Dorsolateral prefrontal cortex (tissue), 120 donors: ENCODE measurements at regions of chr2 and their contacts with region 1.

Region 1: DNA sequence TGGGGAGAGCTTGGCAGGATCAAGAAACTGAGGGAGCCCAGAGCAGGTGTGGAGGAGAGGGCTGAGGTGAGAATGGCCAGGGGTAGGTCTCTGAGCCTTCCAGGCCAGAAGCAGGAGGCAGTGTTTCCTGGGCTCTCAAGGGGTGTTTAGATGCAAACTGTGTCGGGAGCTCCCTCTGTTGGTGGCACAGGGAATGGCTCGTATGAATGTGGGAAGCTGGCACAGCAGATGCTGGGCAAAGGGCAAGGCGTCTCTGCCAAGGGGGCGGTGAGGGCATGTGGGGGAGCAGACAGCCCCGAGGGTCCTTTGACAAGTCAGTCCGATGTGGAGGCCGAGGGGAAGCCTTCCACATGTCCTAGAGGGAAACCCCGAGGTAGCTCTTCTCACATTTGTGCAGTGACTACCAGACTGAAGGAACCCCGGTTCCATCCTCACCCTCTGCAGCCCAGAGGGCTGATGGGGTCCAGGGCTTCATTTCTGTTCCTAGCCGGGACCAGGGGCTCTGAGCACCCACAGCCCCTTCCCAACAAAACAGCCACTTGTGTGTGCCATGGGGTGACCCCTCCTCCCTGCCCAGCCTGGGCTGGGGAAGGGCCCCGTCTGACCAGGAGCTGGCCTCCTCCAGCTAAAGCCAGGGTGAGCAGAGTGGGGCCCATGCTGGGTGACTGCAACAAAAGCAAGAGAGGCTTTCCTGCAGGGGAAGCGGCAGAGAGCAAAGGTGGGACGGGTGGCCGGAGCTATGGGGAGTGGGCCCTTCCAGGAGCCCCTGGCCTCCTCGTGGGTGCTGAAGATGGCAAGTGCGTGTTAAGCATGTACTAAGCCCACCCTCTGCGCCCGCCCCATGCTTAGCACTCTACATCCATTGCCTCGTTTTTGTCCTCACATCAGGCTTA is 103.4 kb downstream of the SEPTIN10 start:
- DNase-seq: peak; percentile 65 to 86 (median 74)
- H3K4me3 ChIP-seq: no peak overlapping the region
- H3K27ac ChIP-seq: no peak overlapping the region
- H3K27me3 ChIP-seq: no peaks in the 10 kb centered on the region
- CTCF ChIP-seq: peak; percentile 76 to 96 (median 91)

Region 2: DNA sequence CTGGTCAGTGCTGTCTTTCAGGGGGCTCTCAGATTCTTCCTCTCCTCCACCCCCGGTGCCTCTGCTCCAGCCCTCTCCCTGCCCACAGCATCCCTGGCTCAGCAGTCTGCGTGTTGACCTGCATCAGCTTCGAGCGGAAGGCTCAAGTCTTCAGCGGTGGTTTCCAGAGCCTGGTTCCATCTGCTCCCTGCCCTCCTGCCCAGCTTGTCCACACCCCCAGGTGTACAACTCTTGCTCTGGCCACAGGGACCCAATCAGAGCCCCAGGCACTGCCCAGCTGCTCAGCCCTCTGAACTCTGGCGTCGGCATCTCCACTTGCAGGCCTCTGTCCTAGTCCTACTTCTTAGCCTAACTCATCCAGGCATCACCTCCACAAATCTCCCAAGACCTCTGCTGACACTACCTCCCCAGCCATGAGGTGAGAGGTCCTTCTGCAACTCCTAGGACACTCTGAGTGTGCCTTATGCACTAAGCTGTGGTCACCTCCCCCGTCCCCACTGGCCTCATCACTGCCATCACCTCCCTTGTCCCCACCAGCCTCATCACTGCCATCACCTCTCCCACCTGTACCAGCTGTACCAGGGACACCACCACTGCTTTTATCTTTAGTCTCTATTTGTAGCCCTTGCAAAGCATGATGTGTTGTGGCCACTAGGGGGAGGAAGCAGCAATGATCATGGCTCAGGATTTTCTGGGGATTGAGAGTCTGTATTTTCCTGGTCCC is 582.3 kb before region 1 on chr2:
- intact Hi-C with region 1: loop called (anchors 10 kb)
- DNase-seq: peak in 2 of 10 donors; percentile 43 to 59
- H3K4me3 ChIP-seq: no peak overlapping the region
- H3K27ac ChIP-seq: no peak overlapping the region
- H3K27me3 ChIP-seq: peaks cover 0 to 3% (median 0%) of the 10 kb centered on the region in 45 donors
- CTCF ChIP-seq: peak; percentile 52 to 82 (median 72)

Region 3: DNA sequence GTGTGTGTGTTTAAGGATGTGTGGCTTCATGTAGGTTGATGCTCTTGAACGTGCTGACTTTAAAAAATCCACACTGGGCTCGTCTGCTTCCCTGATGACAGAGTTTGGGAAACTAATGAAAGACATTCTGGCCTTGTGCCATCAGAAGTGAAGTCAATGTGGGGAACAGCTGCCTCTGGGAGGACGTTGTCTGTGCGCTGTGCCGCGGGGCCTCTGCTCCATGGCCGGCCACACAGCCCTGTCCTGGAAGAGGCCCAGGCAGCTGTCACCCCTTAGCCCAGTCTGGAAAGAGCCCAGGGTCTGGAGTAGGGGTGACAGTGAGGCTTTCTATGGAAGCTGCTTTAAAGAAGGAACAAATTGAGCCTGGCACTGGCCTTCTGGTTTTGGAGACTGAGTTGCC is 225.6 kb before region 1 on chr2:
- intact Hi-C with region 1: loop called in 1 of 2 experiments (anchors 10 kb)
- DNase-seq: no peak
- H3K4me3 ChIP-seq: no peak overlapping the region
- H3K27ac ChIP-seq: peak overlapping the region in 9 of 59 donors; percentile 9 to 46 (median 31)
- H3K27me3 ChIP-seq: no peaks in the 10 kb centered on the region
- CTCF ChIP-seq: no peak

Region 4: GRCh38 chr2:109322111-109322510 is 188.3 kb before region 1 on chr2:
- intact Hi-C with region 1: loop called in 1 of 2 experiments (anchors 5 kb)
- DNase-seq: peak in 8 of 10 donors; percentile 52 to 84 (median 72)
- H3K4me3 ChIP-seq: no peak overlapping the region
- H3K27ac ChIP-seq: peak overlapping the region in 30 of 59 donors; percentile 1 to 77 (median 50)
- H3K27me3 ChIP-seq: no peaks in the 10 kb centered on the region
- CTCF ChIP-seq: no peak

Region 5: DNA sequence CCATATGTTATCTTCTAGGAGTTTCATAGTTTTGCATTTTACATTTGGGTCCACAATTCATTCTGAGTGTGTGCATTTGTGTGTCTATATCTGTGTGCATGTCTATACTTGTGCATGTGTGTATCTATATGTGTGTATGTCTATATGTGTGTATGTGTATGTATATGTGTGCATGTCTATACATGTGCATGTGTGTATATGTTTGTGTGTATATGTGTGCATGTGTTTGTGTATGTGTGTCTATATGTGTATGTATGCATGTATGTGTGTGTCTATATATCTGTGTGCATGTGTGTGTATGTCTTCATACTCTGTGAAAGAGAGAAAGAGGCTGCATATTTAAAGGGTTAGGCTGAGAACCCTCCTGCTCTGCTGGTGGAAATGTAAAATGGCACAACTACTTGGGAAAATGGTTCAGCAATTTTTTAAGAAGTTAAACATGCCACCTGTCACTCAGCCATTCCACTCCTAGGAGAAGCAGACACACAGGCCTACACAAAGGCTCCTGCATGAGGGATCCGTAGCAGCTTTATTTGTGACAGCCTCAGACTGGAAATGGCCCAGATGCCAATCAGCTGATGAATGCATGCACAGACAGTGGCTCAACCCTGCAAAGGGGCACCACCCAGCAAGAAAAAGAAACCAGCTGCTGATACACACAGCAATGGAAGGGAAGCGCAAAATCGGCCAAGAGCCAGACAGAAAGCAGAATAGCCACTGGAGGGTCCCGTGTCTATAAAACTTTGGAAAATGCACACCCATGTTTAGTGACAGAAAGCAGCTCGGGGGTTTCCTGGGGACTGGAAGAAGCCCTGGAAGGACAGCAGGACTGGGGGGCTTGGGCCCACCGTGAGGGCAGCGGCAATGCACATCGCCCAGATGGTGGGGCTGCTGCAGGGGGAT is 43.5 kb before region 1 on chr2:
- intact Hi-C with region 1: no loop called
- DNase-seq: peak in 4 of 10 donors; percentile 52 to 59 (median 54)
- H3K4me3 ChIP-seq: peak overlapping the region in 8 of 59 donors; percentile 7 to 25 (median 14)
- H3K27ac ChIP-seq: peak overlapping the region in 40 of 59 donors; percentile 2 to 75 (median 52)
- H3K27me3 ChIP-seq: no peaks in the 10 kb centered on the region
- CTCF ChIP-seq: no peak

Region 6: GRCh38 chr2:109644576-109645275 is 134.3 kb after region 1 on chr2:
- intact Hi-C with region 1: no loop called
- DNase-seq: no peak
- H3K4me3 ChIP-seq: peak overlapping the region in 1 of 59 donors; percentile 8
- H3K27ac ChIP-seq: peak overlapping the region in 28 of 59 donors; percentile 0 to 66 (median 38)
- H3K27me3 ChIP-seq: no peaks in the 10 kb centered on the region
- CTCF ChIP-seq: no peak